Activated CD4-positive, alpha-beta memory T cell treated with anti-CD3 and anti-CD28 coated beads for 36 hours (primary cell): ENCODE measurements at regions of chr17 and their contacts with region 1.

Region 1: DNA sequence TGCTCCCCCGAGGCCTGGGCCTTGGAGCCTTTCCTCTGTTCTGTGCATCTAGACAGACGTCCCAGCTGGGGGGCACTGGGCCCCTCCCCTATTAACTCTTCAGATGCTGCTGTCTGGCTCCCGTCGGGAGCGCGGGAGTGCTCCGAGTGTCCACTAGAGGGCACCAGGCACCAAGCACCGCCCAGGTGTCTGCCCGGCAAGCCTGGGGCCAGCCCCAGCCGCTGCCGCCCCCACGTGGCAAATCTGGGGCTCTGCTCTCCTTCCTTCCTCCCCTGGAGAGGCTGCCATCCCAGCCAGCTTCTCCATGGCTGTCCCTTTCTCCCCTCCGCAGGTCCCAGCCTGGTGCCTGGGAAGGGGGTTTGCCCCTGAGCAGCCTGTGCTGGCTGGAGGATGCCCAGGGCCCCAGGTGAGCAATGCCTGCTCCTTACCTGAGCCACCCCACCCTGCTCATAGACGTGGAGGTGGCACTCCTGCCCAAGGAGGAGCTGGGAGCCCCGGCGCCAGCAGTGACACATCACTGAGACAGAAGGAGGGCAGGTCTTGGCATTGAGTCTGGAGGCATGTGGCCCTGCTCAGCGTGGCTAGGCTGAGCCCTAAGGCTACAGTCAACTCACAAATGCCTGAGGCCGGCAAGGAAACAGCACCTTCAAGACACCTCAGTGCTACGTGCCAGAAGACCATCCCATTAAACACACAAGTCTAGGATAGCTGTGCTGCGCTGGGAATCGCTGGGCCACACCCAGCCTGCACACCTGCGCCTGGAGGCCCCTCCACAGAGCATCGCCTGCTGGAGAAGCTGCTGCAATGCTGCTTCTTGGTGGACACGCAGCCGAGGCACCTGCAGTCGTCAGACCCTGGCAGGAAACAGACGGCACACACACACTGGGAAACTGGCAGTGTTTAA is 19.7 kb downstream of the TMEM235 start:
- DNase-seq: peak; percentile 92
- H3K4me3 Mint-ChIP-seq: peak overlapping the region; percentile 44
- H3K27ac Mint-ChIP-seq: peak overlapping the region; percentile 9
- H3K4me1 Mint-ChIP-seq: peaks cover 31% of the 10 kb centered on the region
- H3K27me3 Mint-ChIP-seq: no peaks in the 10 kb centered on the region

Region 2: GRCh38 chr17:78128551-78129350 is 122.4 kb before region 1 on chr17 and contains the start of gene TMC6:
- CTCF ChIA-PET with region 1: interaction called, 5 read pairs
- POLR2A ChIA-PET with region 1: interaction called, 4 read pairs
- intact Hi-C with region 1: loop called (anchors 2 kb)
- DNase-seq: peak; percentile 85
- H3K4me3 Mint-ChIP-seq: peak within 1 kb of the TSS; percentile 97
- H3K27ac Mint-ChIP-seq: peak within 1 kb of the TSS; percentile 95
- H3K4me1 Mint-ChIP-seq: peaks cover 51% of the 10 kb centered on the region
- H3K27me3 Mint-ChIP-seq: no peaks in the 10 kb centered on the region
- total RNA-seq, gene TMC6: 157 to 162 TPM

Region 3: GRCh38 chr17:78226749-78227399 is 24.3 kb before region 1 on chr17:
- CTCF ChIA-PET with region 1: interaction called, 25 read pairs
- POLR2A ChIA-PET with region 1: no interaction called
- intact Hi-C with region 1: no loop called
- DNase-seq: peak; percentile 28
- H3K4me3 Mint-ChIP-seq: no peak overlapping the region
- H3K27ac Mint-ChIP-seq: no peak overlapping the region
- H3K4me1 Mint-ChIP-seq: peaks cover 4% of the 10 kb centered on the region
- H3K27me3 Mint-ChIP-seq: peaks cover 14% of the 10 kb centered on the region

Region 4: DNA sequence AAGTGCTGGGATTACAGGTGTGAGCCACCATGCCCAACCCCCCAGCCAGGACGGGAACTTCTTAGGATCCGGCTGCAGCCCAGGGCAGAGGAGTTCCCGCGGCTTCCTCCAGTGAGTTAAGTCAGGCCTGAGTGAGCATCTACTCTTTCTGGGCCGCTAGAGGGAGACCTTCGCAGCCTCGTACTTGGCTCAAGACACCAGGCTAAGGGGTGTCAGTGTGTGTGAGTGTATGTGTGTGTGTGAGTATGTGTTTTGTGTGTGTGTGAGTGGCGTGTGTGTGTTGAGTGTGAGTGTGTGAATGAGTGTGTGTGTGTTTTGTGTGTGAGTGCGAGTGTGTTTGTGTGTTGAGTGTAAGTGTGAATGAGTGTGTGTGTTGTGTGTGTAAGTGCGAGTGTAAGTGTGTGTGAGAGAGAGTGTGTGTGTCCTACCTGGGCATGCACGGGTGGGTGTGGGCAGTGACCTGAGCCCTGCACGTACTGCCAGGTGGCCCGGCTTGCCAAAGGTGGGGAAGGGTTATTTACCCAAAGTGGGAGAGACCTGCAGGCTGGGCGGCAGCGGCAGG is 38.7 kb after region 1 on chr17:
- CTCF ChIA-PET with region 1: interaction called, 4 read pairs
- POLR2A ChIA-PET with region 1: no interaction called
- intact Hi-C with region 1: loop called (anchors 5 kb)
- DNase-seq: peak; percentile 84
- H3K4me3 Mint-ChIP-seq: no peak overlapping the region
- H3K27ac Mint-ChIP-seq: no peak overlapping the region
- H3K4me1 Mint-ChIP-seq: peaks cover 2% of the 10 kb centered on the region
- H3K27me3 Mint-ChIP-seq: no peaks in the 10 kb centered on the region

Region 5: GRCh38 chr17:78324391-78325075 is 73.4 kb after region 1 on chr17:
- CTCF ChIA-PET with region 1: no interaction called
- POLR2A ChIA-PET with region 1: no interaction called
- intact Hi-C with region 1: no loop called
- DNase-seq: peak; percentile 50
- H3K4me3 Mint-ChIP-seq: no peak overlapping the region
- H3K27ac Mint-ChIP-seq: peak overlapping the region; percentile 8
- H3K4me1 Mint-ChIP-seq: peaks cover 24% of the 10 kb centered on the region
- H3K27me3 Mint-ChIP-seq: no peaks in the 10 kb centered on the region

Region 6: DNA sequence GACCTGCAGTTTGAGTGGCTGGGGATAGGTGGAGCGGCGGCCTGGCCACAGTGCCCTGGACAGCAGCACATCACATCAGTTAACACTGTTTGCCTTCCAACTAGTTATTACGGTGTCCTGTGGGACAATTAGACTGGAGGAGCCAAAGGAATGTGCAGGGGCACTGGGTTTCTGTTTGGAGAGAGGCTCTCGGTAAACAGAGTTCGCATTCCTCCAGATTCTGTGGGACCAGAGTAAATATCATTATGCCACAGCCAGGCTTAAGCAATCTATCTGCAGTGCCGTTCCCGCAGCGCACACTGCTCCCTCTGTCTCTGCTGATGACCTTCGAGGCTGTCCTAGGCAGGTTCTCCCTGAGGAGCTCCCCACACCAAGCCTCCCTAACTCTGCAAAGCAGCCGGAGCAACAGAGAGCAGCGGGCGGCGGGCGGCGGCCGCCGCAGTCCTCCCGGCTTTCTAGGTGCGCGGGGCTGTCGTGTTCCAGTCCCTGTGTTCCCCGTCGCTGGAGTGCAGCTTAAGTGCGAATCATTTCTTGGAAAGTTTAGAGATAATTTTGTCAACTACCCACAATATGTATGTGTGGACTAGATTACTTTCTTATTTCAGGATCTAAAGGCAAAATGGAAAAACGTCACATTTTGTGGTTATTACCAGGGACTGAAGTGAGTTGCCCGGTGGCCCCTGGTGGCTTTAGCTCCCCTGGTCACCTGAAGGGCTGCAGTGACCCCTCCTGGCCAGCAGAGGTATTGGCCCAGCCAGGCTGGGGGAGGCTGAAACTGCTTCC is 170.5 kb after region 1 on chr17:
- CTCF ChIA-PET with region 1: interaction called, 36 read pairs
- POLR2A ChIA-PET with region 1: no interaction called
- intact Hi-C with region 1: no loop called
- DNase-seq: peak; percentile 86
- H3K4me3 Mint-ChIP-seq: no peak overlapping the region
- H3K27ac Mint-ChIP-seq: peak overlapping the region; percentile 70
- H3K4me1 Mint-ChIP-seq: peaks cover 46% of the 10 kb centered on the region
- H3K27me3 Mint-ChIP-seq: no peaks in the 10 kb centered on the region